ENCODE measurements at regions of chr9 and their contacts with region 1.

Region 1: DNA sequence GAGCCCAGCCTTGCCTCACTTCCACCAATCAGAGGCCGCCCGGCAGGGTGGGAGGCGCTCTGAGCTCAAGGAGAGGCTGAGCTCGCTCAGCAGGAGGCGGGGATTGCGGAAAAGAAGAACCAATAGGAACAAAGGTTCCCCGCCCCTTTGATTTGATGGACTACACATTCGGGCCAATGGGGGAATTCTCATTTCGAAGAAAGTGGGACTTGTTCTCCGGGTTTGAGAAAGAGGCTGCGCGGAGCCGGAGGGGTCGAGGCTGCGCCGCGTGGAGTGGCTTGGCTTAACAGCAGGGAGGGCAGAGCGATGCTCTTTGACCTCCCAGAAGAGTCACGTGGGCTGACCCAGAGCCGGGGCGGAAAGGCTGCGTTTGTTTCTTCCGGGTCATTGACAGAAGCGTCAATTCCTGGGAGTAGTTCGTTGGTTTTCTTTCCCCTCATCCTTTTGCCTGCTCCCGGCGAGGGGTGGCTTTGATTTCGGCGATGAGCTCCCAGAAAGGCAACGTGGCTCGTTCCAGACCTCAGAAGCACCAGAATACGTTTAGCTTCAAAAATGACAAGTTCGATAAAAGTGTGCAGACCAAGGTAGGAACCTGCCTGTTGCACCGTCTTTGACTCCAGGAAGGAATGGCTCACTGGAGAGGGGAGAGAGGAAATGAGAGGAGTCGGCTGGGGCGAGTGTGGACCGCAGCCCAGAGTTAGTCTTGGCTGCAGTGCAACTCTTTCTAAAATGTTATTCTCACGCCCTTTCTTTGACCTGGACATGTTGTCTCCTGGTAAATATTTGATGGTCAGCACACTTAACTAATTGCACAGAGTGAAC is at the start of gene C9orf85:
- DNase-seq: peak; percentile 98 to 100 (median 100)
- ATAC-seq: peak; percentile 98
- H3K4me3 ChIP-seq: peak within 1 kb of the TSS; percentile 98 to 99
- H3K27ac ChIP-seq: peak within 1 kb of the TSS; percentile 96 to 97
- H3K4me1 ChIP-seq: peaks cover 18 to 41% of the 10 kb centered on the region in 2 donors
- H3K27me3 ChIP-seq: no peaks in the 10 kb centered on the region
- CTCF ChIP-seq: no peak
- polyA plus RNA-seq, gene C9orf85: 16.2 to 20.8 (median 18.6) TPM

Region 2: GRCh38 chr9:71858812-71859211 is 52.7 kb before region 1 on chr9:
- intact Hi-C with region 1: loop called in 1 of 2 experiments (anchors 10 kb)
- DNase-seq: no peak
- ATAC-seq: no peak
- H3K4me3 ChIP-seq: no peak overlapping the region
- H3K27ac ChIP-seq: no peak overlapping the region
- H3K4me1 ChIP-seq: no peaks in the 10 kb centered on the region
- H3K27me3 ChIP-seq: no peaks in the 10 kb centered on the region
- CTCF ChIP-seq: no peak